ENCODE measurements at regions of chr18 and their contacts with region 1.

Region 1: GRCh38 chr18:46173393-46174341 is 69.5 kb downstream of the HAUS1 start:
- DNase-seq: peak; percentile 85 to 94 (median 92)
- H3K4me3 ChIP-seq: peak overlapping the region; percentile 77 to 100 (median 96)
- H3K27ac ChIP-seq: peak overlapping the region; percentile 48 to 98 (median 93)
- H3K27me3 ChIP-seq: no peaks in the 10 kb centered on the region
- CTCF ChIP-seq: peak; percentile 43 to 94 (median 74)

Region 2: GRCh38 chr18:45430041-45430440 is 743.6 kb before region 1 on chr18:
- intact Hi-C with region 1: no loop called
- DNase-seq: no peak
- H3K4me3 ChIP-seq: no peak overlapping the region
- H3K27ac ChIP-seq: no peak overlapping the region
- H3K27me3 ChIP-seq: no peaks in the 10 kb centered on the region
- CTCF ChIP-seq: no peak

Region 3: GRCh38 chr18:46054956-46055837 is 118.5 kb before region 1 on chr18:
- intact Hi-C with region 1: no loop called
- DNase-seq: no peak
- H3K4me3 ChIP-seq: no peak overlapping the region
- H3K27ac ChIP-seq: no peak overlapping the region
- H3K27me3 ChIP-seq: no peaks in the 10 kb centered on the region
- CTCF ChIP-seq: no peak

Region 4: DNA sequence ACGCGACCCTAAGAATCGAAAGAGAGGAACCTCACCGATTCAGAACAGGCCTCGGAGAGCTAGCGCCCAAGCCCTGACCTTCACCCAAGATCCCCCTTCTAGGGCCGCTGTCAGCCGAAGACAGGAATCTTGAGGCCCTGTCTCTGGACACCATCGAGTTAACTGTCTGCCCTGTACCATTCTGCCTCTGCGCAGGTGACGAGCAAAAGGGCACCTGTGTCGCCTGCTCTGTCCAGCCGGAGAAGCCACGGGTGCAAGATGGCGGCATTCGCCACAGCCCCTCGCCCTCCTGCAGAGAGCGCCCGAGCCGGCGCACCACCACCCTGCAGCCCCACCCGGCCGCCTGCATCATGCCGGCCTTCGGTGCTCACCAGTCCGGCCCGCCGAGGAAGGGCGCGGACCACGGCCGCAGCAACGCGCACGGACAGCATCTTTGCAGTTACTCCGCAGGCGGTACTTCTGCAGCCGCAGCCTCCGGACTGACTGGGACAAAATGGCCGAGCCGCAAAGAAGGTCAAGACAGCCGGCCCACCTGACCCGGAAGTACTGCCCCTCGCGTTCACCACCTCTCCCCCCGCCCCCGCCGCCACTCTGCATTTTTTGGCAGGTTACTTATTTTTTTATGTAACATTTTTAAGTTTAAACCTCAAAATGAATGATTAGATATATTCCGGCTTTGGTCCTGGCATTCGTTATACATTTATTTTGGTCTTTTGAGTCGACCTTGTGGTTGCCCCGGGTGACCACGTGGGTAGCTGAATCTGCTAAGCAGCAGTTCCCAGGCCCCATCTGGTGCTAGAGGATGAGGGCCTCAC is 75.7 kb before region 1 on chr18 and contains the start of gene ATP5F1A:
- intact Hi-C with region 1: loop called (anchors 5 to 10 kb)
- DNase-seq: peak; percentile 78 to 95 (median 92)
- H3K4me3 ChIP-seq: peak within 1 kb of the TSS; percentile 65 to 99 (median 93)
- H3K27ac ChIP-seq: peak within 1 kb of the TSS; percentile 71 to 99 (median 96)
- H3K27me3 ChIP-seq: no peaks in the 10 kb centered on the region
- CTCF ChIP-seq: peak in 28 of 56 donors; percentile 5 to 55 (median 24)
- total RNA-seq, gene ATP5F1A: 250 to 674 (median 475) TPM

Region 5: DNA sequence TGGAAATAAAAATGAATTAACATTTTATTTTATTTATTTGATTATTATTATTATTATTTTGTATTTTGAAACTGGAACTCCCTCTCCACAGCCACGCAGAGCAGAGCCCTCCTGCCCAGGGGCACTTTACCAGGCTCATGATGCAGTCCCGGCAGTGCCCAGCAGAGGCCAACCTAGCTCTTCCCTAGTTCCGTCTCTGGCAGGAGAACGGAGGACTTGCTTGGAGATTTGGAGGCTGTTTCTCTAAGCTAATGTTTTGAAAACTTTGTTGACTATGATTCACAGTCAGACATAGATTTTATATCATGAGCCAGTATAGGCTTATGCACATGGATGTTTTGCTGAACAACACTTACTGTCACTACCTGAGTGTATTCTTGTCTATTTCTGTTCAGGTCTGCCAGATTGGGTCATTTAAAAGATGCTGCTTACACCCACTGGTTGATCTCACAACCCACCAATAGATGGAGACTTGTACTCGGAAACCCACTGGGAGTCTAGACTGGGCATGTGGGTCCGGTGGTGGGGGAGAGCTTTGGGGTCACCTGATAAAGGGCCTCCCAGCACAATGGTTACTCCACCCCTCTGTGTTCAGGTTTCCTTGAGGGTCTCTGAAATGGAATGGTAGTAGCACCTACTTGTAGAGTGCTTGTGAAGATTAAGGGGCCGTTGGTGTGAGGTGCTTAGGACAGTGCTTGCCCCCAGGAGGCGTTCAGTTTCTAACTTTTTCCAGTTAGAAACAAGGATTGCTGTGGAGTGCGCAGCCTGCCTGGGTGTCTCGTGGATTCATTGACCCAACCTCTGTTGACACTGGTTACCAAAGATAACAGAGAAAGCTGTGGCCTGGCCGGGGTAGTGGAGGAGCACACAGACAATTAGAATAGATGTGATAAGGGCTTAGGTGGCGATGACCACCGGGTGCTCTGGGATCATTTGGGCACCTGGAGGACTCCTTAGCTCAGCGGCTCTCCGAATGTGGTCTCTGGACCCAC is 107.8 kb after region 1 on chr18:
- intact Hi-C with region 1: loop called in 1 of 2 experiments (anchors 10 kb)
- DNase-seq: peak; percentile 56 to 83 (median 70)
- H3K4me3 ChIP-seq: no peak overlapping the region
- H3K27ac ChIP-seq: no peak overlapping the region
- H3K27me3 ChIP-seq: no peaks in the 10 kb centered on the region
- CTCF ChIP-seq: peak; percentile 54 to 99 (median 90)

Region 6: GRCh38 chr18:46660955-46661749 is 487.5 kb after region 1 on chr18:
- intact Hi-C with region 1: loop called (anchors 1 kb)
- DNase-seq: peak; percentile 82 to 97 (median 95)
- H3K4me3 ChIP-seq: peak overlapping the region in 1 of 59 donors; percentile 23
- H3K27ac ChIP-seq: peak overlapping the region in 40 of 59 donors; percentile 3 to 83 (median 42)
- H3K27me3 ChIP-seq: no peaks in the 10 kb centered on the region
- CTCF ChIP-seq: peak in 20 of 56 donors; percentile 12 to 44 (median 18)

Region 7: DNA sequence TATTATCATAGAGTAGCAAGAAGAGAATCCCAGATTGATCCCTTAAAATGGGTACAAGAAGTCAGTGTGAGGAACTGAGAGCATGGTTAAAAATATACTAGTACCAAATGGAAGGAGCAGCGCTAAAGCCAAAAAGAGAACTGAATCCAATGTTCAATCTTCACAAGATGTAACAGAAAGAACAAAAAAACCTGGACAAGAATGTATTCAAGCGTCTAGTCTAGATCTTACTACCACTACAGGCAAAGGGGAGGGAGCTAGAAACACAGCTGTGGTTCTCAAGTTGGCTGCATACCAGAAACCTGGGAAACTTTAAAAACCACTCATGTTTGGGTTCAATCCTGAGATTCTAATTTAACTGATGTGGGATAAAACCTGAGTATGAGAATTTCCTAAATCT is 686.2 kb after region 1 on chr18:
- intact Hi-C with region 1: loop called in 1 of 2 experiments (anchors 2 kb)
- DNase-seq: no peak
- H3K4me3 ChIP-seq: no peak overlapping the region
- H3K27ac ChIP-seq: no peak overlapping the region
- H3K27me3 ChIP-seq: no peaks in the 10 kb centered on the region
- CTCF ChIP-seq: no peak